ENCODE measurements at regions of chr18 and their contacts with region 1.

Region 1: GRCh38 chr18:59837586-59837985 is 62.2 kb upstream of the PMAIP1 start:
- DNase-seq: peak; percentile 81
- ATAC-seq: peak; percentile 87
- H3K4me3 ChIP-seq: peak overlapping the region in 1 of 2 experiments; percentile 37; a peak in 2 of 4 replicates
- H3K27ac ChIP-seq: no peak overlapping the region
- H3K4me1 ChIP-seq: no peaks in the 10 kb centered on the region
- H3K27me3 ChIP-seq: no peaks in the 10 kb centered on the region
- CTCF ChIP-seq: peak; percentile 82

Region 2: DNA sequence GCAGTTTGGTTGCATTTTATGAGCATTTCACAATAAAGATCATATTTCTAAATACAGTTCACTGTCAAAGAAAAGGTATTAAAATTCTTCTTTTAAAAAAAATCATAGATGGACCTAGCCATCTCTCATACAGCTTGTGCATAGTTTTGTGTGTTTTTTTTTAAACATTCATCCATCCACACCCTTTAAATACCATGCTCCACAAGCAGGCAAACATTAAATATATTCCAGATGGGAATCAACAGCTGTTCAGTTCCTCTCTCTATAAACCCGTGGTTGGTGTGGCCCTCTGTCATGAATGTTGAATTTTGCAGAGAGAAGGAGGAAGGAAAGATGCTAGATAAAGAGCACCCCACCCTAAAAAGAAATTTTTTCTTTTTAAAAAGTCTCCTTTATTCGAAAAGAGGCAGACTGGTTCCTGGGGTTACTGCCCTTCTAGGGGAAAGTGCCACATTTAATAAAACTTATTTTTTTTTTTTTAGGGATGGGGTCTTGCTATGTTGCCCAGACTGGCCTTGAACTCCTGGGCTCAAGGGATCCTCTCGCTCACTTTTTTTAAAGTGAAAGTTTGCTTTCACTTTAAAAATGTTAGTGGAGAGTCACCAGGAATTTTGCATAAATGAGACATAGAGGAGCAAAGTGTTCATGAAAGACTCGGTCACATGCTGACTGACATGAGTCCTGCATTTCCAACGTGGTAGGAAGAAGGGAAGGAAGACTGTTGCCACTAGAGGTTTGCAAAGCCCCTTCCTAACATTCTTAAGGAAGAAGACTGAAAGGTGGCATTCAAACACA is 404.6 kb before region 1 on chr18:
- CTCF ChIA-PET with region 1: no interaction called
- POLR2A ChIA-PET with region 1: no interaction called
- in situ Hi-C with region 1: no loop called
- intact Hi-C with region 1: no loop called
- DNase-seq: no peak
- ATAC-seq: no peak
- H3K4me3 ChIP-seq: no peak overlapping the region
- H3K27ac ChIP-seq: no peak overlapping the region
- H3K4me1 ChIP-seq: no peaks in the 10 kb centered on the region
- H3K27me3 ChIP-seq: no peaks in the 10 kb centered on the region
- CTCF ChIP-seq: no peak

Region 3: DNA sequence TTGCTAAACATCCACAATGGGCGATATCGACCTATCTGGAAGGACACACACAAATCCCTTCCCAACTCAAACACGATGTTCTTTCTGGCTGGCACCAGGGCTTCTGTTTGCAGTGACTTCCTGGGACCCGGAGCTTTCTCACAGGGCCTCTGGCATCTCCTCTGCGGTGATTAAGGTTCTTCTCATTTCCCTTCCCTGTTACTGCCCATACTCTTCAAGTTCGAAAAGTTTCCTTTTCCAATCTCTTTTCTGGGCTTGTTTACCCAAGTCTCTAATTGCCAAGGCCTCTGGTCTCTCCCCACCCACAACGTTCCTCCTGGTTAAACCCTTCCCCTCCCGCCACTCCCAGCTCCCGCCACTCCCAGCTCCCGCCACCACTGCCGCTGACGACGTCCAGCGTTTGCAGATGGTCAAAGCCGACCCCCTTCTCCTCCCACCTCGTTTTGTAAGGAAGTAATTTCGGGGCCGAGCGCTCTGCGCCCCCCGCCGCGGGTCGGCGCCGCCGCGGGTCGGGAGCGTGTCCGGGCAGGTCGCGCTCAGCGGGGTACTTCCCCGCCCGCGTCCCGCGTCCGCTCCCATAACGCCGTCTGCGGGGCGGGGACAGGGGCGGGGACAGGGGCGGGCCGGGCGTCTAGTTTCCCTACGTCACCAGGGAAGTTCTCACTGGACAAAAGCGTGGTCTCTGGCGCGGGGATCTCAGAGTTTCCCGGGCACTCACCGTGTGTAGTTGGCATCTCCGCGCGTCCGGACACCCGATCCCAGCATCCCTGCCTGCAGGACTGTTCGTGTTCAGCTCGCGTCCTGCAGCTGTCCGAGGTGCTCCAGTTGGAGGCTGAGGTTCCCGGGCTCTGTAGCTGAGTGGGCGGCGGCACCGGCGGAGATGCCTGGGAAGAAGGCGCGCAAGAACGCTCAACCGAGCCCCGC is 62.0 kb after region 1 on chr18 and contains the start of gene PMAIP1:
- CTCF ChIA-PET with region 1: no interaction called
- POLR2A ChIA-PET with region 1: no interaction called
- in situ Hi-C with region 1: no loop called
- intact Hi-C with region 1: loop called (anchors 1 kb)
- DNase-seq: no peak
- ATAC-seq: peak; percentile 96
- H3K4me3 ChIP-seq: peak within 1 kb of the TSS; percentile 67 to 82
- H3K27ac ChIP-seq: peak within 1 kb of the TSS; percentile 73
- H3K4me1 ChIP-seq: peaks cover 12% of the 10 kb centered on the region; the same call in 1 of the 2 replicates
- H3K27me3 ChIP-seq: no peaks in the 10 kb centered on the region
- CTCF ChIP-seq: no peak
- total RNA-seq, gene PMAIP1: 7.7 TPM

Region 4: GRCh38 chr18:59957971-59958595 is 120.5 kb after region 1 on chr18:
- CTCF ChIA-PET with region 1: no interaction called
- POLR2A ChIA-PET with region 1: no interaction called
- in situ Hi-C with region 1: no loop called
- intact Hi-C with region 1: loop called (anchors 10 kb)
- DNase-seq: no peak
- ATAC-seq: no peak
- H3K4me3 ChIP-seq: no peak overlapping the region
- H3K27ac ChIP-seq: no peak overlapping the region
- H3K4me1 ChIP-seq: no peaks in the 10 kb centered on the region
- H3K27me3 ChIP-seq: no peaks in the 10 kb centered on the region
- CTCF ChIP-seq: no peak